Posterior vena cava (tissue), 2 donors: ENCODE measurements at regions of chr12 and their contacts with region 1.

Region 1: DNA sequence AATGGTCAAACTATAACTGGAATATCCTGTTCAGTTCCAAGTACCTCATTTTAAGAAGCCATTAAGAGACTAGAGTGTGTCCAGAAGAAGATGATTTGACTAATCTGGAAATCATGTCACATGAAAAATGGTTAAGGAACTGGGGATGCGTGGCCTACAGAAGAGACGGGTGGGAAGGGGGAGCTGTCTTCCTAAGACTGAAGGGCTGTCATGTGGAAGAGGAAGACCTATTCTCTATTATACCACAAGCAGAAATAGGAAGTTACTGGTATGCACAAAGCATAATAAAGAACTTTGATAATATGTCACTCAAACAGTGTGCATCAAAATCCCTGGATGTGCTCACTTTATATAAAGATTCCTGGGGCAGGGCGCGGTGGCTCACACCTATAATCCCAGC is 50.3 kb downstream of the HECTD4 start:
- DNase-seq: no peak

Region 2: GRCh38 chr12:110733089-110733715 is 1598.7 kb before region 1 on chr12:
- intact Hi-C with region 1: loop called in 1 of 2 experiments (anchors 10 kb)
- DNase-seq: no peak